ENCODE measurements at regions of chr2 and their contacts with region 1.

Region 1: GRCh38 chr2:84905181-84906107 is at the start of gene TMSB10:
- DNase-seq: peak; percentile 94
- ATAC-seq: peak; percentile 84
- H3K4me3 ChIP-seq: peak within 1 kb of the TSS; percentile 67 to 98 (median 93)
- H3K4me3 Mint-ChIP-seq: peak within 1 kb of the TSS; percentile 87
- H3K27ac ChIP-seq: peak within 1 kb of the TSS; percentile 77 to 83
- H3K27ac Mint-ChIP-seq: peak within 1 kb of the TSS; percentile 94
- H3K4me1 ChIP-seq: peaks cover 41 to 46% of the 10 kb centered on the region in 2 donors
- H3K4me1 Mint-ChIP-seq: peaks cover 60% of the 10 kb centered on the region
- H3K27me3 ChIP-seq: no peaks in the 10 kb centered on the region
- H3K27me3 Mint-ChIP-seq: no peaks in the 10 kb centered on the region
- CTCF ChIP-seq: peak; percentile 6
- total RNA-seq, gene TMSB10: 868 and 885 TPM in 2 replicates

Region 2: DNA sequence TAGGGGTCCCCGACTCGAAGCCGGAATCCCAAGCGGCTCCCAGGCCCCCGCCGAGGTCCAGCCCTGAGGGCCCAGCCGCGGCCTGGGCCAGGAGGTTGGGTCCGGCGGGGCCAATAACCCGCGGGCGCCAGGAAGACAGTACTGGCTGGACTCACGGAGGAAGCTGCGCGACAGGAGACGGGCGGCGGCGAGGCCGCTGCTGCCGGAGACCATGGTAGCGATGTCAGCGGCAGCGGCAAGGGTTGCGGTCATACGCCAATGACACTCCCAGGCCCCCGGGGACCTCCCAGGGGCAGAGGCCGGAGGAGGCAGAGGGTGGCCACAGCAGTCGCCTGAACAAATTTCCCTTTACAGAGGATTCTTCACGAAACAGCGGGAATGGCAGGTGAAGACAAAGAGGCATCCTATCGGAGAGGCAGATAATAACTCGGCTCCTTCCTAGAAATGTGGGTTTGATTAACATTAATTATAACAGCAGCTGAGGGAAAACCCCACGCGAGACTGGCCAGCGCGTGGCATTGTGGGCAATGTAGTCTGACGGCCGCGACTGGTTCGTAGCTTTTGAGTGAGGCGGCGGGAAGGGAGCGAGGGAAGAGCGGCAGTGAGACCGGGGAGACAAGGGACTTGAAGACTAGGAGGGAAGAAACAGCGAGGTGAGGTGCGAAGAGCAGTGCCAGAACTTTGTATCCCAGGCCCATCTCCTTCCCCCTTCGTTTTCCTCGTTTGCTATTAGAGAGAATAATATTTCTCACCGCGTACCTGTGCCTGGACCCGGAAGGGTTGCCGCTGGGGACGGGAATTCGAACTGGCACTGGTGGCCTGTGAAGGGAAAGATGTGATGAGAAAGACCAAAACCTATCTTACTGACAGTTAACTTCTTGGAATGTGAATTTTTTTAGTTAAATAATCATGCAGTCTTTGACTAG is 446.2 kb before region 1 on chr2 and contains the start of gene SUCLG1:
- CTCF ChIA-PET with region 1: no interaction called
- POLR2A ChIA-PET with region 1: no interaction called
- intact Hi-C with region 1: loop called (anchors 1 kb)
- DNase-seq: peak; percentile 94
- ATAC-seq: peak; percentile 97
- H3K4me3 ChIP-seq: peak within 1 kb of the TSS; percentile 67 to 95 (median 91)
- H3K4me3 Mint-ChIP-seq: peak within 1 kb of the TSS; percentile 93
- H3K27ac ChIP-seq: peak within 1 kb of the TSS; percentile 84 to 93
- H3K27ac Mint-ChIP-seq: peak within 1 kb of the TSS; percentile 97
- H3K4me1 ChIP-seq: peaks cover 20 to 23% of the 10 kb centered on the region in 2 donors
- H3K4me1 Mint-ChIP-seq: peaks cover 37% of the 10 kb centered on the region
- H3K27me3 ChIP-seq: no peaks in the 10 kb centered on the region
- H3K27me3 Mint-ChIP-seq: no peaks in the 10 kb centered on the region
- CTCF ChIP-seq: no peak
- total RNA-seq, gene SUCLG1: 31.8 and 33.6 TPM in 2 replicates

Region 3: DNA sequence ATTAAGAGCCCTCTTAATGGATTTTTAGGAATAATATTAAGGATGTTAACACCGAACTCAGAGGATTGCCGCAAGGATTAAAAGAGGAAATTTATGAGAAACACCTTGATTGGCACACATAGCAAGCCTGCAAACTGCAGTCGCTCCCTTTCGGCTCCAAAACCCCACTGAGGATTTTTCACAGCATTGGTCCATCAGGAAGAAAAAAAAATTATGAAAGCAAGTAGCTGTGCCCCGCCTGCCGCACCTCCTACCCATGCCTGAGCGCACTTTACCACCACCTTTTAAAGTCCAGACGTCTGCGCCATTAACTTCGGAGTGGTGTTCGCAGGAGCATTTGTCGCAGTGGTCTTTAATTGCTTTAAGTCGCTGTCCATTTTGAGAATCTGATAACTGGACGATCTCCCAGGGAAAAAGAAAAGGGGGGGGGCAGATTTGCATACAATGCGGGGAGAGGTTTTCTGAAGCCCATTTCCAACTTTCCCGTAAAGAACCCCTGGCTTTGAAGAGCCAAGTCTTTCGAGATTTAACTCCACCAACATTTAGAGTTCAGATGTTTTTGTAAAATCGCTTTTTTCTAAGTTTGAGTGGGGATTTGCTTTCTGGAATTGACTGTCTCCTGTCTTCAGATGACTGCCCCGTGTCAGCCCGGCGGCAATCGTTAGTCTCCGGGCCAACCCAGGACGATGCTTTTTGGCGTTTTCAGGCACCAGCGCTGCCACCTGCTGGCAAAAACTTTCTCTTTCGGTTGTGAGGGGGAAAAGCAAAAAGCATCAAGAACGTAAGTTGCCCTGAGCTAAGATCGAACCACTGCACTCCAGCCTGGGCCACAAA is 23.6 kb before region 1 on chr2:
- CTCF ChIA-PET with region 1: interaction called, 70 read pairs
- POLR2A ChIA-PET with region 1: interaction called, 47 read pairs
- intact Hi-C with region 1: loop called (anchors 1 kb)
- DNase-seq: peak; percentile 90
- ATAC-seq: peak; percentile 78
- H3K4me3 ChIP-seq: peak overlapping the region; percentile 66 to 98 (median 83)
- H3K4me3 Mint-ChIP-seq: peak overlapping the region; percentile 92
- H3K27ac ChIP-seq: peak overlapping the region; percentile 72 to 92
- H3K27ac Mint-ChIP-seq: peak overlapping the region; percentile 95
- H3K4me1 ChIP-seq: peaks cover 16 to 31% of the 10 kb centered on the region in 2 donors
- H3K4me1 Mint-ChIP-seq: peaks cover 36% of the 10 kb centered on the region
- H3K27me3 ChIP-seq: no peaks in the 10 kb centered on the region
- H3K27me3 Mint-ChIP-seq: no peaks in the 10 kb centered on the region
- CTCF ChIP-seq: peak; percentile 78

Region 4: DNA sequence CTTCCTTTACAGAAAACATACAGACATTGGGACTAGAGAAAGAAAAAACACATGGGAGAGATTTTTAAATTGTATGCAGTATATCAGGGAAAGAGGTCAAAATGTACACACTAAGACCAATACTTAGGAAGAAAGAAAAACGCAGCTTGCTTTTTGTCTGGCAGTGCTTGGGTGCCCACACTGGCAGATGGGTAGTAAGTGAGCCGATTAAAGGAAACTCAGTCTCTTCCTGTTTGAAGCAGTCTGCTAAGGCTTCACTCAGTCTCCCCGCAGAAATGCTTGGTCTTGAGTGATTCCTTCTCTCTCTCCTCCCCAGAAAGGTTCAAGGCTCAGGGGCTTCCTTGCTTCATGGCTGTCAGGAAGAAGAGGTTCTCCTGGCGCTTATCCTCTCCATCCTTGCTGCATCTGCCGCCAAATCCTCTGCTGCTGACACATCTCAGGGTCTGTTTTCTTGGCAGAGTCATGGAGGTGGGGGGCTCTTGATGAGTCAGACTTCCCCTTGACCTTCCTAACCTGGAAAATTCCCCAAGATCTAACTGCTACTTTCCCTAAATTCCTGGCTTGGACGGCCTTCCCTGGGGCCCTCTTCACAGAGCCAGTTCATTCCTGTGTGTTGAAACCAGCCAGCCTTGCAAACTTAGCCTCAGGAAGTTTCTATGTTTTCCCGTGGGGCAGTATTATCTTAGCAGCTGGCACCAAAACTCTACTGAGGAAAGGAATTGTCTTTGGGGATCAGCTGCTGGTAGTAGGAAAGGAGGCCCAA is 10.5 kb before region 1 on chr2:
- CTCF ChIA-PET with region 1: interaction called, 35 read pairs
- POLR2A ChIA-PET with region 1: interaction called, 40 read pairs
- intact Hi-C with region 1: loop called (anchors 1 kb)
- DNase-seq: peak; percentile 67
- ATAC-seq: peak; percentile 61
- H3K4me3 ChIP-seq: peak overlapping the region in 4 of 5 experiments; percentile 3 to 46 (median 32)
- H3K4me3 Mint-ChIP-seq: peak overlapping the region; percentile 20
- H3K27ac ChIP-seq: peak overlapping the region; percentile 78 to 91
- H3K27ac Mint-ChIP-seq: peak overlapping the region; percentile 85
- H3K4me1 ChIP-seq: peaks cover 38 to 42% of the 10 kb centered on the region in 2 donors
- H3K4me1 Mint-ChIP-seq: peaks cover 49% of the 10 kb centered on the region
- H3K27me3 ChIP-seq: no peaks in the 10 kb centered on the region
- H3K27me3 Mint-ChIP-seq: no peaks in the 10 kb centered on the region
- CTCF ChIP-seq: no peak

Region 5: DNA sequence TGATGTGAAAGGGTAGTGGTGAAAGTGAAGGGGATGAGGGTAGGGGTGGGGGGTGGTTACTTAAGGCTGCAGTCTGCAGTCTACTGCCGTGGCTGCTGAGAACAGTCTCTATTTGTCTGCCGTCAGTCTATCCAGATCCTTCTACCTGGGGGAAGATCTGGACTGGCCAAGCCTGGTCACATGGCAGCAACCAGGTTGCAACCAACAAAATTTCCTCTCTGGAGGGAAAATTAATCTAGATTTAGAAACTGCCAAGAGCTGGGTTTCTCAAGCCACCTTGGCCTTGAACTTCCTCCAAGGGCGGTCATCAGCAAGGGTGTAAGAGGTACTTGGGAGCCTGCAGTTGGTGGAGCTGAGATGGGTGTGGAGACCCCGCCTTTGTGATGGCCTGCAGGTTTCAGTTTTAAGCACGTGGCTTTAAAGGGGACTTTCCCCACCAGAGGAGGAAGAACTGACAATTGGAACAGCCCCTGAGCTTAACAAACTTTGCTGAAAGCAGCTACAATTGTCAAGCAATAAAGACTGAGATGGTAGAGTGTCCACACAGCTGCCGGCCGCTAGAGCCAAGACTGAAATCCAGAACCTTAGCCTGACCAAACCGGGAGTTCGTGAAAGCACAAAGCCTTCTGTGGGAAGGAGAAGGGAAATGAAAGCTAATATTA is 34.1 kb after region 1 on chr2:
- CTCF ChIA-PET with region 1: interaction called, 10 read pairs
- POLR2A ChIA-PET with region 1: interaction called, 15 read pairs
- intact Hi-C with region 1: no loop called
- DNase-seq: peak; percentile 93
- ATAC-seq: peak; percentile 96
- H3K4me3 ChIP-seq: peak overlapping the region in 4 of 5 experiments; percentile 15 to 55 (median 38)
- H3K4me3 Mint-ChIP-seq: peak overlapping the region; percentile 76
- H3K27ac ChIP-seq: peak overlapping the region; percentile 88 to 90
- H3K27ac Mint-ChIP-seq: peak overlapping the region; percentile 90
- H3K4me1 ChIP-seq: peaks cover 53 to 65% of the 10 kb centered on the region in 2 donors
- H3K4me1 Mint-ChIP-seq: peaks cover 50% of the 10 kb centered on the region
- H3K27me3 ChIP-seq: no peaks in the 10 kb centered on the region
- H3K27me3 Mint-ChIP-seq: no peaks in the 10 kb centered on the region
- CTCF ChIP-seq: no peak

Region 6: GRCh38 chr2:86623651-86624541 is 1718.5 kb after region 1 on chr2 and contains the start of gene RNF103:
- CTCF ChIA-PET with region 1: no interaction called
- POLR2A ChIA-PET with region 1: interaction called, 8 read pairs
- intact Hi-C with region 1: loop called (anchors 10 kb)
- DNase-seq: peak; percentile 97
- ATAC-seq: peak; percentile 82
- H3K4me3 ChIP-seq: peak within 1 kb of the TSS; percentile 71 to 87 (median 78)
- H3K4me3 Mint-ChIP-seq: peak within 1 kb of the TSS; percentile 94
- H3K27ac ChIP-seq: peak within 1 kb of the TSS; percentile 93 to 94
- H3K27ac Mint-ChIP-seq: peak within 1 kb of the TSS; percentile 97
- H3K4me1 ChIP-seq: peaks cover 17% of the 10 kb centered on the region in 2 donors
- H3K4me1 Mint-ChIP-seq: peaks cover 35% of the 10 kb centered on the region
- H3K27me3 ChIP-seq: no peaks in the 10 kb centered on the region
- H3K27me3 Mint-ChIP-seq: no peaks in the 10 kb centered on the region
- CTCF ChIP-seq: no peak
- total RNA-seq, gene RNF103: 36.1 and 37.2 TPM in 2 replicates